Heart left ventricle (tissue), 16 donors: ENCODE measurements at regions of chr20 and their contacts with region 1.

Region 1: GRCh38 chr20:33666293-33667244 is at the start of gene ACTL10:
- DNase-seq: peak; percentile 97 to 99 (median 97)
- ATAC-seq: peak; percentile 76 to 86 (median 82)
- H3K4me3 ChIP-seq: peak within 1 kb of the TSS; percentile 19 to 74 (median 62)
- H3K27ac ChIP-seq: peak within 1 kb of the TSS; percentile 25 to 94 (median 84)
- H3K4me1 ChIP-seq: peaks cover 3 to 62% (median 36%) of the 10 kb centered on the region in 12 donors
- H3K27me3 ChIP-seq: no peaks in the 10 kb centered on the region
- CTCF ChIP-seq: peak in 8 of 12 donors; percentile 9 to 66 (median 32)
- POLR2A ChIP-seq: peak in 1 of 2 donors; percentile 97
- total RNA-seq, gene ACTL10: 0.13 to 1.1 (median 0.36) TPM

Region 2: GRCh38 chr20:33401184-33401920 is 265.2 kb before region 1 on chr20 and contains the start of gene CDK5RAP1:
- intact Hi-C with region 1: loop called in 2 of 10 experiments (anchors 5 kb)
- DNase-seq: peak; percentile 86 to 91 (median 87)
- ATAC-seq: peak; percentile 74 to 97 (median 94)
- H3K4me3 ChIP-seq: peak within 1 kb of the TSS; percentile 70 to 100 (median 91)
- H3K27ac ChIP-seq: peak within 1 kb of the TSS; percentile 55 to 86 (median 74)
- H3K4me1 ChIP-seq: peaks cover 0 to 30% (median 16%) of the 10 kb centered on the region in 12 donors
- H3K27me3 ChIP-seq: no peaks in the 10 kb centered on the region
- CTCF ChIP-seq: peak in 1 of 12 donors; percentile 3
- POLR2A ChIP-seq: peak in 1 of 2 donors; percentile 42
- total RNA-seq, gene CDK5RAP1: 17.6 to 24.3 (median 20.1) TPM

Region 3: DNA sequence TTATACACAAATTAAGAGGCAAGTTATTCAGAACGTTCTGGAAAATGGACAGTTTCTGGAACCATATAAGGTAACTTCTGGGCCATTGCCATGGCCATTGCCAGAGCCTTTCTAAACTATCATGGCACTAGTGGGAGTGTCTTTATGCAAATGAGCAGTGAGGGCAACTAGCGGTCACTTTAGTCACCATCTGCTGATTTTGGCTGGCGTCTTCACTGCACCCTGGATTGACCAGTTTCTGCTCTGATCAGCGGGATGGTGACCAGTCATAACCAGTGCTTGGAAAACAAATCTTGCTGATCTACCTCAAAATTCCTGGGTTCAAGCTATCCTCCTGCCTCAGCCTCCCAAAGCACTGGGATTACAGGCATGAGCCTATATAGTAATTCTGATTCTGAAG is 215.7 kb before region 1 on chr20:
- intact Hi-C with region 1: loop called in 5 of 10 experiments (anchors 2 to 5 kb)
- DNase-seq: no peak
- ATAC-seq: no peak
- H3K4me3 ChIP-seq: no peak overlapping the region
- H3K27ac ChIP-seq: no peak overlapping the region
- H3K4me1 ChIP-seq: no peaks in the 10 kb centered on the region
- H3K27me3 ChIP-seq: no peaks in the 10 kb centered on the region
- CTCF ChIP-seq: no peak
- POLR2A ChIP-seq: no peak

Region 4: GRCh38 chr20:33460711-33461110 is 205.9 kb before region 1 on chr20:
- intact Hi-C with region 1: loop called in 6 of 10 experiments (anchors 2 to 5 kb)
- DNase-seq: no peak
- ATAC-seq: no peak
- H3K4me3 ChIP-seq: no peak overlapping the region
- H3K27ac ChIP-seq: no peak overlapping the region
- H3K4me1 ChIP-seq: peaks cover 0 to 16% (median 3%) of the 10 kb centered on the region in 12 donors
- H3K27me3 ChIP-seq: no peaks in the 10 kb centered on the region
- CTCF ChIP-seq: no peak
- POLR2A ChIP-seq: no peak

Region 5: GRCh38 chr20:33602826-33603590 is 63.6 kb before region 1 on chr20:
- intact Hi-C with region 1: no loop called
- DNase-seq: no peak
- ATAC-seq: no peak
- H3K4me3 ChIP-seq: no peak overlapping the region
- H3K27ac ChIP-seq: no peak overlapping the region
- H3K4me1 ChIP-seq: peaks cover 0 to 12% (median 4%) of the 10 kb centered on the region in 12 donors
- H3K27me3 ChIP-seq: no peaks in the 10 kb centered on the region
- CTCF ChIP-seq: no peak
- POLR2A ChIP-seq: no peak